Natural killer cell (primary cell): ENCODE measurements at regions of chr14 and their contacts with region 1.

Region 1: GRCh38 chr14:21092273-21093011 is 6.0 kb downstream of the ZNF219 start:
- DNase-seq: peak; percentile 94 to 97
- ATAC-seq: peak; percentile 91 to 98 (median 94)
- H3K4me3 ChIP-seq: no peak overlapping the region
- H3K4me3 Mint-ChIP-seq: no peak overlapping the region
- H3K27ac ChIP-seq: no peak overlapping the region
- H3K27ac Mint-ChIP-seq: peak overlapping the region; percentile 41 to 68
- H3K4me1 ChIP-seq: peaks cover 18% of the 10 kb centered on the region
- H3K4me1 Mint-ChIP-seq: peaks cover 13 to 14% of the 10 kb centered on the region in 2 donors
- H3K27me3 ChIP-seq: no peaks in the 10 kb centered on the region
- H3K27me3 Mint-ChIP-seq: no peaks in the 10 kb centered on the region
- CTCF ChIP-seq: peak; percentile 100

Region 2: GRCh38 chr14:21014761-21015190 is 77.7 kb before region 1 on chr14:
- intact Hi-C with region 1: loop called (anchors 1 kb)
- DNase-seq: peak; percentile 72 to 92
- ATAC-seq: peak; percentile 74 to 89 (median 87)
- H3K4me3 ChIP-seq: no peak overlapping the region
- H3K4me3 Mint-ChIP-seq: no peak overlapping the region
- H3K27ac ChIP-seq: no peak overlapping the region
- H3K27ac Mint-ChIP-seq: no peak overlapping the region
- H3K4me1 ChIP-seq: no peaks in the 10 kb centered on the region
- H3K4me1 Mint-ChIP-seq: no peaks in the 10 kb centered on the region
- H3K27me3 ChIP-seq: peaks cover 4% of the 10 kb centered on the region
- H3K27me3 Mint-ChIP-seq: peaks cover 14 to 18% of the 10 kb centered on the region in 2 donors
- CTCF ChIP-seq: peak; percentile 88

Region 3: DNA sequence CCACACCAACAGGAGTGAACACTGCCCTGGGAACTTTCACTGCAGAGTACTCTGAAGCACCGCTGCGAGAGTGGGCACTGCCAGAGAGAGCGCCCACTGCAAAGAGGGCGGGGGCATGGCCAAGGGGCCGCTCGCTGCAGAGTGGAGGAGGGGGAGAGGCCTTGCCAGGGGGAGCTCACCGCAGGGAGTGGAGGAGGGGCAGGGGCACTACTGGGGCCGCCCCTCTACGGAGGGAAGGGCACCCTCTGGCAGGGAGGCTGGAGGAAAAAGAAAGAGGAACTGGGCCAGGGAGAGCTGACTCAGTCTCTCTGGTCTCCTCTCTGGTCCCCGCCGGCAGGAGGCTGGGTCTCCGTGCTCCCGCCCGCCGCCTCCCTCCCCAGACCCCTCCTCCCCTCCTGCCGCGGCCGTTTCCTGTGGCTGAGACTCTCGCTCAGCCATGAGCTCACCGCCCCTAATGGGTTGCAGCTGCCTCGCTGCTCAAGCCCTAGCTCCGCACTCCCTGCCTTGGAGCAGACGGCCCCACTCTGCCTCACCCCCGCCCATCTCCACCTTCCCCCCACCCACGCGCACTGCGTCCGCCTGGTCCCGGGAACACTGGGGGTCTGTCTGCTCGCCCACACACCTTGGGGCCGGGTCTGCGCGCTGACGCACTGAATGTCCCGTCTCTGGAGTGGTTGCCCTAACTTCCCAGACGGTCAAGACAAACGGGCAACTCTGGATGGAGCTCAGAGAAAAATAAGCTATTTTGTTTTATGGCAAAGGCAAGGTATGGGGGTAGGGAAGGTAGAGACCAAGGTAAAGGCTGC is 21.0 kb before region 1 on chr14:
- intact Hi-C with region 1: loop called (anchors 1 kb)
- DNase-seq: peak; percentile 37 to 61
- ATAC-seq: peak; percentile 52 to 64 (median 61)
- H3K4me3 ChIP-seq: peak overlapping the region; percentile 30
- H3K4me3 Mint-ChIP-seq: peak overlapping the region; percentile 89
- H3K27ac ChIP-seq: no peak overlapping the region
- H3K27ac Mint-ChIP-seq: peak overlapping the region; percentile 51 to 88
- H3K4me1 ChIP-seq: peaks cover 44% of the 10 kb centered on the region
- H3K4me1 Mint-ChIP-seq: peaks cover 31 to 41% of the 10 kb centered on the region in 2 donors
- H3K27me3 ChIP-seq: peaks cover 37% of the 10 kb centered on the region
- H3K27me3 Mint-ChIP-seq: peaks cover 60 to 64% of the 10 kb centered on the region in 2 donors
- CTCF ChIP-seq: no peak

Region 4: GRCh38 chr14:21113369-21113768 is 20.9 kb after region 1 on chr14:
- intact Hi-C with region 1: no loop called
- DNase-seq: no peak
- ATAC-seq: no peak
- H3K4me3 ChIP-seq: no peak overlapping the region
- H3K4me3 Mint-ChIP-seq: no peak overlapping the region
- H3K27ac ChIP-seq: no peak overlapping the region
- H3K27ac Mint-ChIP-seq: no peak overlapping the region
- H3K4me1 ChIP-seq: no peaks in the 10 kb centered on the region
- H3K4me1 Mint-ChIP-seq: no peaks in the 10 kb centered on the region
- H3K27me3 ChIP-seq: no peaks in the 10 kb centered on the region
- H3K27me3 Mint-ChIP-seq: peaks cover 6 to 8% of the 10 kb centered on the region in 2 donors
- CTCF ChIP-seq: no peak